Gastrocnemius medialis (tissue), 4 donors: ENCODE measurements at regions of chr6 and their contacts with region 1.

Region 1: GRCh38 chr6:14550822-14551221 is 433.2 kb downstream of the CD83 start:
- DNase-seq: peak; percentile 86 to 91
- ATAC-seq: peak; percentile 98
- H3K4me3 ChIP-seq: no peak overlapping the region
- H3K27ac ChIP-seq: peak overlapping the region; percentile 56 to 82 (median 72)
- H3K4me1 ChIP-seq: peaks cover 8 to 19% of the 10 kb centered on the region in 2 donors
- H3K27me3 ChIP-seq: no peaks in the 10 kb centered on the region
- CTCF ChIP-seq: no peak
- POLR2A ChIP-seq: no peak

Region 2: DNA sequence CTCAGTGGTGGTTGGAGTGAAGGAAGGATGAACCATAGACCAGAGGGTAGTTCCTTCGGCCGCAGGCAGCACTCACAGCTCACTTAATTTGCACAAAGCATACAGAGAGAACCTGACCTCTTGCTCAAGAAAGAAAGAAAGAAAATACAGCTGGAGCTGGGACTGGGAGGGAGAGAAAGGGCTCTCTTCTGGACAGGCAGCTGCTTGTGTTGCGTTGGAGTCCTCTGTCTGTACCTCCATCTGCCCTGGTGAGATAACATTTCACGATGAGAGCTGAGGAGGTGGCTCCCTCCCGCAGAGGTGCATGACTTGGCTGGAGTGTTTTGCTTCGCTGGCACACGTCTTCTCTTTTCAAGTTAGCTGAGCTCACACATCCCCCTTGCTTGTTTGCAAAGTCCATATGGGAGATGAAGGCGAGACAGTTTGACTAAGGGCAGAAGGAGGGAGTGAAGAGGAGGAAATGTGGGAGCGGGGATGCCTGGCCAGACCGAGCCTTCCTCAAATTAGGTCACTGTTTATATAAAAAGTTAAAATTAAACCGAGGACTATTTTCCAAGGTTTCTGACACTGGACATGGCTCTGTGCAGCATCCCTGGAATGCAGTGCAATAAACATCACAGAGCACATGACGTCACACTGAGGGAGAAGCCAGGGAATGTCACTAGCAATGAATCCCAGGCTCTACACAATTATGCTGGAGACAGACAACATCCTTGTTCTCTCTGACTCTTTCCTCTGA is 73.9 kb before region 1 on chr6:
- in situ Hi-C with region 1: no loop called
- intact Hi-C with region 1: loop called (anchors 2 kb)
- DNase-seq: peak in 1 of 2 donors; percentile 44
- ATAC-seq: peak; percentile 82 to 84
- H3K4me3 ChIP-seq: no peak overlapping the region
- H3K27ac ChIP-seq: peak overlapping the region; percentile 51 to 61 (median 52)
- H3K4me1 ChIP-seq: peaks cover 19 to 20% of the 10 kb centered on the region in 2 donors
- H3K27me3 ChIP-seq: no peaks in the 10 kb centered on the region
- CTCF ChIP-seq: no peak
- POLR2A ChIP-seq: no peak

Region 3: DNA sequence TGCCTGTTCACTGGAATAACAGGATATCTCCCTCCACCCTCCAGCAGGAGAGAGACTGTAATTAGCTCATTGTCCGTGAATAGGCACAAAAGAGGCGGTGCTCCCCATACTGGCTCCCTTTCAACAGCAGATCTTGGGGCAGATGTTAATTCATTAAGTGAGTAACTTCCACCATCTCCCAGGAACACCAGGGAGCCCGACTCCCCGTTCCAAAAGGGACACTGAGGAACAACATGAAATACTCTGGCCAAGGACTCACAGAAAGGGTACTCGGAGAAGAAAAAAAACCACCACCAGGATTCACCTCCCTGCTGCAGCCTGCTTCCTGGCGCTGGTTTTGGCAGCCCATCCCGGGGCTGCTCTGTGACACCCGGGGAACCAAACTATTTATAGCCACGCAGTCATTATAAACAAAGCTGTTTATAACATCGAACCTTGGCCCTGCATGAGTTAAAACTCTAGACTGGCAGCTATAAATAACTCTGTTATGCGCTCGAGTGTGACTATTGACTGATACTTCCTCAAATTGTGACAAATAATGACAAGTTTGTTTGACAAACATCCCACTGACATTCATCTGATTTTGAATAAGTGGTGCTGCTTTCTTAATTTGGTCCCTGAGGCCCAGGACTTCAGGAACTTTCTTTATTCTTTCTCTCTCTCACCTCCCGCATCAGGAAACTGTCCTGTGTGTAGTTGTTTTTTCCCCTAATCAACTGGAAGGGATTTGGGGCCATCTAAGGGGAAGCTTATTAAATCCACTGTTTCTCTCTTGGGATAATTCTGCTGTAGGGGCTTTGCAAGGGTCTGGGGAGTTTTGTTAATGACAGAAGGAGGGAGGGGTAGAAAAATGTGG is 88.3 kb after region 1 on chr6:
- in situ Hi-C with region 1: no loop called
- intact Hi-C with region 1: loop called (anchors 2 kb)
- DNase-seq: peak; percentile 50 to 74
- ATAC-seq: peak; percentile 92 to 94
- H3K4me3 ChIP-seq: peak overlapping the region; percentile 44 to 54 (median 48)
- H3K27ac ChIP-seq: peak overlapping the region; percentile 83 to 94 (median 86)
- H3K4me1 ChIP-seq: peaks cover 45 to 46% of the 10 kb centered on the region in 2 donors
- H3K27me3 ChIP-seq: no peaks in the 10 kb centered on the region
- CTCF ChIP-seq: peak in 2 of 5 experiments; percentile 20
- POLR2A ChIP-seq: peak in 1 of 2 donors; percentile 51

Region 4: GRCh38 chr6:14984519-14984853 is 433.7 kb after region 1 on chr6:
- in situ Hi-C with region 1: no loop called
- intact Hi-C with region 1: no loop called
- DNase-seq: peak in 1 of 2 donors; percentile 50
- ATAC-seq: peak; percentile 52 to 84
- H3K4me3 ChIP-seq: peak overlapping the region in 3 of 4 donors; percentile 0 to 13 (median 4)
- H3K27ac ChIP-seq: peak overlapping the region in 1 of 4 donors; percentile 2
- H3K4me1 ChIP-seq: peaks cover 7 to 16% of the 10 kb centered on the region in 2 donors
- H3K27me3 ChIP-seq: no peaks in the 10 kb centered on the region
- CTCF ChIP-seq: no peak
- POLR2A ChIP-seq: no peak